ENCODE measurements at regions of chr12 and their contacts with region 1.

Region 1: GRCh38 chr12:118183705-118184104 is 47.8 kb downstream of the PEBP1 start:
- DNase-seq: no peak
- CTCF ChIP-seq: no peak

Region 2: DNA sequence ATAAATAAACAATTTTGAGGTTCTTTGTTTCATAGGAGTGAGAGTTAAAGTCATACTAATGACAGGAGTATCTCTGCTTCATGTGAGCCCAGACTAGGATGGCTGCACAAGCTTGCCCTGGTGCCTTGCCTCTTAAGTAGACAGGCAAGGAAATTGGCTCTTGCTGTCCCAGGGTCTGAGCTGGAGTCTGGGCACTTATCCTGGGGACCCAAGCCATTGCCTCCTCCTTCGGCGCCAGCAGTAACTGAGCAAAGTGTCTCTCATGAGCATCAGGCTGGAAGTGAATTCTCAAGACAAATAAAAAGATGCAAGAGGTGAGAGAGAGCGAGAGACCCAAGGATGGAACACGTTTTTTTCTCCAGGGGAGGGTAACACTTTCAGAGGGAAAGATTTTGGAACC is 1279.9 kb before region 1 on chr12:
- CTCF ChIA-PET with region 1: no interaction called
- POLR2A ChIA-PET with region 1: no interaction called
- DNase-seq: no peak
- CTCF ChIP-seq: no peak

Region 3: DNA sequence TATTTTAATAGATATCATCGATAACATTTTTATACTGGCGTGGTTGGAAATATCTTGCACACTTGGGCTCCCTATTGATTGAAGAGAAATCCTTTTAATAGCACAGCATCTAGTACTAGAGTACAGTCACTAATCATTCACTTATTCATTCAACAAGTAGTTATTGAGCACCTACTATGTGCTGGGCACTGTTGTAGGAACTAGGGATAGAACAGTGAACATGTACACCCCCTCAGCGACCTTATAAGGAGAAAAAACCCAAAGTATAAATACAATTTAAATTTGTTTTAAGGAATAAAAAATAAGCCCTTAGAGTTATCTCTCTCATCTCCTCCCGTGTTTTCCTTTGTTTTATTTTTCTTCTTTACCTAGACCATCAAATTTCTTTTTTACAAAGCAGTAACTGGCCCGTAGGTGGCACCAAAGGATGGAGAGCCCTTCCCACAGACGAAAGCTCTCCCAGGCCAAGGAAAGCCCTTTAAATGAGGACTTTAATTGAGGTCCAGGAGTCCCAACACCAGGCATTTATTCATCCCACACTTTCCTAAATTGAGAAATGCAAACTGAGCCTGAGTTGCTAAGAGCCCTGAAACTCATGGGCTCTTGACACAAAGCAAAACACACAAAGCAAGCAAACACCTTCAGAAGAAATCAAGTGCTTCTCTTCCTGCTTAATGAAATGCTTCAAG is 18.8 kb before region 1 on chr12:
- CTCF ChIA-PET with region 1: interaction called, 57 read pairs
- POLR2A ChIA-PET with region 1: no interaction called
- DNase-seq: no peak
- CTCF ChIP-seq: peak; percentile 43